ENCODE measurements at regions of chr14 and their contacts with region 1.

Region 1: GRCh38 chr14:24889843-24890242 is 160.1 kb downstream of the STXBP6 start:
- DNase-seq: no peak
- ATAC-seq: peak in 4 of 8 donors; percentile 45 to 77 (median 72)
- H3K4me3 ChIP-seq: no peak overlapping the region
- H3K27ac ChIP-seq: no peak overlapping the region
- H3K4me1 ChIP-seq: peaks cover 0 to 40% (median 14%) of the 10 kb centered on the region in 9 donors
- H3K27me3 ChIP-seq: no peaks in the 10 kb centered on the region
- CTCF ChIP-seq: no peak

Region 2: DNA sequence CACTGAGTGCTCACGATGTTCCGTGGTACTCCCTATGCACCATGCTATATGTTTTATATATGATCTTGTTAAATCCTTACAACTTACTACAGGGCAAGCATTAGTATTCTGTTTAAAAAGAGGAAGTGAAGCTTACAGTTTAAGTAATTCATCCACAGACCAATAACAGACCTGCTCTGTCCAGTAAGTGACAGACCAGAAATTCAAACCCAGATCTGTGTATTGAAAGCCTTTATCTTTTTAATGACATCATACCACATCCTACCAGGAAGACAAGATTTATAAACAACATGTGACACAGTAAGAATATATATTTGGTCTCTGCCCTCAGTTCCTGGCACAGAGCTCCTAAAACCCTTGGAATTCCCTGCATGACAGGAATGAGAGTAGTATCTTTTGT is 46.3 kb before region 1 on chr14:
- intact Hi-C with region 1: loop called in 1 of 10 experiments (anchors 1 kb)
- DNase-seq: no peak
- ATAC-seq: peak in 1 of 8 donors; percentile 40
- H3K4me3 ChIP-seq: no peak overlapping the region
- H3K27ac ChIP-seq: no peak overlapping the region
- H3K4me1 ChIP-seq: peaks cover under 1 to 37% (median 21%) of the 10 kb centered on the region in 9 donors
- H3K27me3 ChIP-seq: no peaks in the 10 kb centered on the region
- CTCF ChIP-seq: no peak

Region 3: GRCh38 chr14:25197885-25198284 is 308.0 kb after region 1 on chr14:
- intact Hi-C with region 1: no loop called
- DNase-seq: no peak
- ATAC-seq: no peak
- H3K4me3 ChIP-seq: no peak overlapping the region
- H3K27ac ChIP-seq: no peak overlapping the region
- H3K4me1 ChIP-seq: no peaks in the 10 kb centered on the region
- H3K27me3 ChIP-seq: no peaks in the 10 kb centered on the region
- CTCF ChIP-seq: no peak